OCI-LY7 (cell line): ENCODE measurements at regions of chr12 and their contacts with region 1.

Region 1: GRCh38 chr12:95473884-95474659 is at the start of gene METAP2:
- DNase-seq: peak; percentile 95
- H3K4me3 ChIP-seq: peak within 1 kb of the TSS; percentile 97
- H3K27ac ChIP-seq: peak within 1 kb of the TSS; percentile 80
- H3K4me1 ChIP-seq: peaks cover 48% of the 10 kb centered on the region
- CTCF ChIP-seq: no peak
- total RNA-seq, gene METAP2: 90.3 and 102 TPM in 2 replicates

Region 2: GRCh38 chr12:95343461-95344230 is 130.4 kb before region 1 on chr12:
- CTCF ChIA-PET with region 1: no interaction called
- POLR2A ChIA-PET with region 1: interaction called, 27 read pairs
- intact Hi-C with region 1: loop called (anchors 2 kb)
- DNase-seq: peak; percentile 85
- H3K4me3 ChIP-seq: peak overlapping the region; percentile 29
- H3K27ac ChIP-seq: peak overlapping the region; percentile 94
- H3K4me1 ChIP-seq: peaks cover 92% of the 10 kb centered on the region
- CTCF ChIP-seq: peak; percentile 4; the same call in 1 of the 2 replicates

Region 3: DNA sequence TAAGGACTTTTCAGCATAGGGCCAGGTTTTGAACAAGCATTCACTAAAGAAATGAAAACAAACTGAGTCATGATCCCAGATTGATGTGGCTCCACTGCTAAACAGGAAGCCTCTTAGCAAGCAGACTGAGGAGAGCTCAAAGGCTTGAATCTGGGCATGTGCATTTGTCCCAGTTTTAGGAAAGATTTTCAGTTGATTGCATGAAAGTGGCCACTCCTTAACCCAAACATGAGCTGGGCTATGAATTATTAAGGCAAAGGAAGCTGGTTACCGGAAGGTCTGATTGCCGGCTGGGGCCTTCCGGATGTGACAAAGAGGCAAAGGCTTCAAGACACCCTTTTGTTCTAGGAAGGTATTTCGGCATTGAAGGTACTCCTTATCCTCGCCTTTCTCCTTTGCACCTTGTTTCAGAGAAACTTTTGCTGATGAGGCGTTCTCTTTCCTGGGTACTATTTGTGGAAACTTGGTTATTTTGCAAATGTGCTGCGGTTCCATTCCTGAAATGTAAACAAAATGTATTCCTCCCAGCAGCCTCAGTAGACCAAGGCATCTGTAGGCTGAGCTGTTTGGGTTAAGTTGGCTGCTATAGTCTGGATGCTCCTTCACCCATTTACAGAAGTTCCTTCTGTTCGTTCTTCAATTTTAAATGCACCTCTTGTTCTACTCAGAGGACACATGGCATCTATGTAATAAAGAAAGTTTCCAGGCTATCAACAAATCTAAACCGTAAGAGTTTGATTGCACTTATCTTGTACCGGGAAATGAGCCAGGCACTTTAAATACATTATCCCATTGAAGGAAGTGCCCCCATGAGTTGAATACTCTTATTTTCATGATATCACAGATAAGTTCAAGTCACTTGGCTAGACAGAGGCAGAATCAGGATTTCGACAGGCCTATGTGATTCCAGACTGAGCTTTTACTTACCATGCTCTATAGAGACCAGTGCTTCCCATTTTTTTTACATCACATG is 115.7 kb before region 1 on chr12:
- CTCF ChIA-PET with region 1: no interaction called
- POLR2A ChIA-PET with region 1: interaction called, 18 read pairs
- intact Hi-C with region 1: no loop called
- DNase-seq: peak; percentile 67
- H3K4me3 ChIP-seq: peak overlapping the region; percentile 55
- H3K27ac ChIP-seq: peak overlapping the region; percentile 70
- H3K4me1 ChIP-seq: peaks cover 65% of the 10 kb centered on the region
- CTCF ChIP-seq: no peak

Region 4: DNA sequence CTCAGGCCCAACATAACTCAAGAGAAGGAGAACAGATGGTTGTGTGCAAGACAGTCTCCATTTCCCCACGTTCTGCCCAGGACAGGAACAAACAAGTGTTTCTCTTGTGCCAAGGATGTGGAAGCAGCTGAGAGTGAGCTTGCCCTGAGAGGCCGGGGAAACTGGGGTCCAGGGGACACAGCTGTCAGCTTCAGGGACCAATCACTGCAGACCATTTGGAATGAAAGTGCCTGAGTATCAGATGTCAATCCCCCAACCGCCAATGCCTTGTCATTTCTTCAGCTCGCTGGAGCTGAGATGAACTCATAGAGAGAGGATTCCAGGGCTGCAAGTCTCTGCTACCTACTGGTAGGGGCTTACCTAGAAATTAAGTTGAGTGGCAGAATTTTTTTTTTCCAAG is 72.0 kb before region 1 on chr12:
- CTCF ChIA-PET with region 1: no interaction called
- POLR2A ChIA-PET with region 1: no interaction called
- intact Hi-C with region 1: no loop called
- DNase-seq: no peak
- H3K4me3 ChIP-seq: no peak overlapping the region
- H3K27ac ChIP-seq: no peak overlapping the region
- H3K4me1 ChIP-seq: no peaks in the 10 kb centered on the region
- CTCF ChIP-seq: no peak

Region 5: DNA sequence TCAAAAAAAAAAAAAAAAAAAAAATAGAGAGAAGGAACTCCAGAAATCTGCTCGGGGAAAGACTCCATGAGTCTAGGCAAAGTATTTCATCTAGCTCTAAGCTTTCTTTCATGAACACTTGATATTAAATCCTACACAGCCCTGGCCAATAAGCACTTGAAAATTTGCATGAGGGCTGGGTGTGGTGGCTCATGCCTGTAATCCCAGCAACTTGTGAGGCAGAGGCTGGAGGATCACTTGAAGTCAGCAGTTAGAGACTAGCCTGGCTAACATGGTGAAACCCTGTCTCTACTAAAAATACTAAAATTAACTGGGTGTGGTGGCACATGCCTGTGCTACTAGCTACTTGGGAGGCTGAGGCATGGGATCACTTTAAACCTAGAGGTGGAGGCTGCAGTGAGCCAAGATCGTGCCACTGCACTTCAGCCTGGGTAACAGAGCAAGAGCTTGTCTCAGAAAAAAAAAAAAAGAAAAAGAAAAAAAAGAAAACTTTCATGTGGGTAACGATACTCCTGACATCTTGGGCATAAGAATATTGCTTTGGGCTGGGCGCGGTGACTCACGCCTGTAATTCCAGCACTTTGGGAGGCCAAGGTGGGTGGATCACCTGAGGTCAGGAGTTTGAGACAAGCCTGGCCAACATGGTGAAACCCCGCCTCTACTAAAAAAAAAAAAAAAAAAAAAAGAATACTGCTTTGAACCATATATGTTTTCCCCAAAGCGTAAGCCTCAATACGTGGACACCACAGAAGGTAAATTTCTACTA is 13.0 kb before region 1 on chr12:
- CTCF ChIA-PET with region 1: no interaction called
- POLR2A ChIA-PET with region 1: interaction called, 35 read pairs
- intact Hi-C with region 1: no loop called
- DNase-seq: no peak
- H3K4me3 ChIP-seq: no peak overlapping the region
- H3K27ac ChIP-seq: no peak overlapping the region
- H3K4me1 ChIP-seq: peaks cover 13% of the 10 kb centered on the region
- CTCF ChIP-seq: no peak

Region 6: GRCh38 chr12:95755261-95755865 is 281.3 kb after region 1 on chr12:
- CTCF ChIA-PET with region 1: no interaction called
- POLR2A ChIA-PET with region 1: no interaction called
- intact Hi-C with region 1: no loop called
- DNase-seq: no peak
- H3K4me3 ChIP-seq: no peak overlapping the region
- H3K27ac ChIP-seq: no peak overlapping the region
- H3K4me1 ChIP-seq: no peaks in the 10 kb centered on the region
- CTCF ChIP-seq: no peak